MCF 10A (cell line): ENCODE measurements at regions of chr1 and their contacts with region 1.

Region 1: GRCh38 chr1:23344111-23344986 is at the start of gene HNRNPR:
- DNase-seq: peak; percentile 100
- H3K4me3 Mint-ChIP-seq: peak within 1 kb of the TSS; percentile 77
- H3K27ac Mint-ChIP-seq: peak within 1 kb of the TSS; percentile 76
- H3K4me1 Mint-ChIP-seq: peaks cover 36% of the 10 kb centered on the region
- H3K27me3 Mint-ChIP-seq: no peaks in the 10 kb centered on the region
- CTCF ChIP-seq: no peak
- total RNA-seq, gene HNRNPR: 128 and 152 TPM in 2 replicates

Region 2: DNA sequence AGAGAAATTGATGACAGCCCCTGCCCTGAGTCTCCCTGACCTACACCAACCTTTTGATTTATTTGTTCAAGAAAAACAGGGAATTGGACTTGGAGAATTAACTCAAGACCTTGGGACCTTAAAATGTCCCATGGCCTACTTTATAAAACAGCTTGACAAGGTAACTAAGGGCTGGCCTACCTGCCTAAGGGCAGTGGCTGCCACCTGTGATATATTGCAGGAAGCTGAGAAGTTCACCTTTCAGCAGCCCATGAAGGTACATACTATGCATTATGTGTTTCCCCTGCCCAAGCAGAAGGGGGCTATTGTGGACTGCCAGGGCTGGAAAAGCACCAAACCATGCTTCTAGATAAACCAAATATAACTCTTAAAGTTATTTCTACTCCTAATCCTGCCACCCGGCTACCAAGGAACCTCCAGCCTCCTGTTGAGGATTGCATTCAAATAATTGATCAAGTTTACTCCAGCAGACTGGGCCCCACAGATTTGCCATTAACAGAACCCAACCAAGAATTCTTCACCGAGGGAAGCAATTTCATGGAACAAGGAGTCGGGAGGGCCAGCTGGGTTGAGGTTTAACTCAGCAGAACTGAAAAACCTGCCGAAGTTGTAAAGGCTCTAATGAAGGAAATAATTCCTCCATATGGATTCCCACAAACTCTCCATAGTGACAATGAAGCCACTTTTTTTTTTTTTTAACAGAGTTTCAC is 399.8 kb before region 1 on chr1:
- CTCF ChIA-PET with region 1: no interaction called
- POLR2A ChIA-PET with region 1: no interaction called
- intact Hi-C with region 1: no loop called
- DNase-seq: no peak
- H3K4me3 Mint-ChIP-seq: no peak overlapping the region
- H3K27ac Mint-ChIP-seq: no peak overlapping the region
- H3K4me1 Mint-ChIP-seq: no peaks in the 10 kb centered on the region
- H3K27me3 Mint-ChIP-seq: no peaks in the 10 kb centered on the region
- CTCF ChIP-seq: no peak

Region 3: DNA sequence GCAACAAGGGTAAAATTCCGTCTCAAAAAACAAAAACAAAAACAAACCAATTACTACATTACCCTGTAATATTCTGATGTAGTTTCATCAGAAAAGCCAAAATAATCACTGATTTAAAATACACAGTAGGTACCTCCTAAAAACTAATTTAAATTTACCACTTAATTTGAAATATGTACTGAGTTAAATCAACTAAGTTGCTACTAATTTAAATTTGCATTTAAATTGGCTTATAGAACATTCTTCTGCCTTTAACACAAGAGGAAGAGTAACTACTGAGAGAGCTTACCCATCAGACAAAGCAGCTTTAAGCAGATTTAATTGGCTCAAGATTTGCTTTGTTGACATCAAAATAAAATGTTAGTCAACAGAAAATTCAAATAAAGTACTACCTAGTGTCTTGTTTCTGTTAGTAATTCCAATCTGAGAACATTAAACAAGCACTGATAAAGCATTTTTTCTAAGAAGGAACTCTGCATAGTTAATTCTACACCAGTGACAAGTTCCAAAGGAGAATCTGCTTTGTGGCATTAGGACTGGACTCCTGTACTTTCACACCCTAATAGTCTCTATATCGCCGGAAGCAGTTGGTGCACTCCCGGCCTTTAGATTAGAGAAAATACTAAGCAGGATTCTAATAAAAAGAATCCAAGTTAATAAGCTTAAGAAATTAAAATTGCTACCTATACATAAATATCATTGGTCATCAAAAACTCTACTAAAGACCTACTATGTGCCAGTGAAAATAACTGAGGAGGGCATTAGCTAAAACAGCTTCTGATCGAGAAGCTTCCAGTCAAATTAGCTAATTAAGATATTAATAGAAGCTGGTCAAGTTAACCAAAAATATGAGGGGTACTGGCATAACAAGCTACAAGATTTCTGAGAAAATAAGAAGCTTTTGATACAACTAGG is 184.1 kb before region 1 on chr1:
- CTCF ChIA-PET with region 1: no interaction called
- POLR2A ChIA-PET with region 1: no interaction called
- intact Hi-C with region 1: no loop called
- DNase-seq: no peak
- H3K4me3 Mint-ChIP-seq: no peak overlapping the region
- H3K27ac Mint-ChIP-seq: no peak overlapping the region
- H3K4me1 Mint-ChIP-seq: peaks cover 27% of the 10 kb centered on the region
- H3K27me3 Mint-ChIP-seq: no peaks in the 10 kb centered on the region
- CTCF ChIP-seq: no peak

Region 4: DNA sequence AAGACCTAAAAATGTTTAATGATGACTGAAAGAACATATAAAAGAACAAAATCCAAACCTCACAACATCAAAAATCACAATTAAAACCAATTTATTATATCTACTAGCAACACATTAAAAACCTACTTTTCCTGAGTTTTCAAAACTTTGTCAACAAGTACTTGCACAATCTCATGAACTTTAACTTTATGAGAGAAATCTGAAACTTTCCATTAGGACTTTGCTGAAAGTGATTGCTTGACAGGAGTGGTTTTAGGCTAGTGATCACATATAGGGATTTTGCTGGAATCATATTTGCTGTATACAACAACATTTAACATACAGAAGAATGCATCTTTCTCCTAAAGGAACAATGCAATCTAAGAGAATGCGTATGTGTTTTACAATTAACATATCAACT is 13.5 kb before region 1 on chr1:
- CTCF ChIA-PET with region 1: interaction called, 3 read pairs
- POLR2A ChIA-PET with region 1: interaction called, 31 read pairs
- intact Hi-C with region 1: no loop called
- DNase-seq: no peak
- H3K4me3 Mint-ChIP-seq: no peak overlapping the region
- H3K27ac Mint-ChIP-seq: no peak overlapping the region
- H3K4me1 Mint-ChIP-seq: peaks cover 13% of the 10 kb centered on the region
- H3K27me3 Mint-ChIP-seq: no peaks in the 10 kb centered on the region
- CTCF ChIP-seq: no peak

Region 5: GRCh38 chr1:23367791-23368561 is 23.6 kb after region 1 on chr1:
- CTCF ChIA-PET with region 1: interaction called, 6 read pairs
- POLR2A ChIA-PET with region 1: interaction called, 335 read pairs
- intact Hi-C with region 1: loop called (anchors 1 kb)
- DNase-seq: peak; percentile 99
- H3K4me3 Mint-ChIP-seq: peak overlapping the region; percentile 87
- H3K27ac Mint-ChIP-seq: peak overlapping the region; percentile 94
- H3K4me1 Mint-ChIP-seq: peaks cover 28% of the 10 kb centered on the region
- H3K27me3 Mint-ChIP-seq: no peaks in the 10 kb centered on the region
- CTCF ChIP-seq: no peak

Region 6: DNA sequence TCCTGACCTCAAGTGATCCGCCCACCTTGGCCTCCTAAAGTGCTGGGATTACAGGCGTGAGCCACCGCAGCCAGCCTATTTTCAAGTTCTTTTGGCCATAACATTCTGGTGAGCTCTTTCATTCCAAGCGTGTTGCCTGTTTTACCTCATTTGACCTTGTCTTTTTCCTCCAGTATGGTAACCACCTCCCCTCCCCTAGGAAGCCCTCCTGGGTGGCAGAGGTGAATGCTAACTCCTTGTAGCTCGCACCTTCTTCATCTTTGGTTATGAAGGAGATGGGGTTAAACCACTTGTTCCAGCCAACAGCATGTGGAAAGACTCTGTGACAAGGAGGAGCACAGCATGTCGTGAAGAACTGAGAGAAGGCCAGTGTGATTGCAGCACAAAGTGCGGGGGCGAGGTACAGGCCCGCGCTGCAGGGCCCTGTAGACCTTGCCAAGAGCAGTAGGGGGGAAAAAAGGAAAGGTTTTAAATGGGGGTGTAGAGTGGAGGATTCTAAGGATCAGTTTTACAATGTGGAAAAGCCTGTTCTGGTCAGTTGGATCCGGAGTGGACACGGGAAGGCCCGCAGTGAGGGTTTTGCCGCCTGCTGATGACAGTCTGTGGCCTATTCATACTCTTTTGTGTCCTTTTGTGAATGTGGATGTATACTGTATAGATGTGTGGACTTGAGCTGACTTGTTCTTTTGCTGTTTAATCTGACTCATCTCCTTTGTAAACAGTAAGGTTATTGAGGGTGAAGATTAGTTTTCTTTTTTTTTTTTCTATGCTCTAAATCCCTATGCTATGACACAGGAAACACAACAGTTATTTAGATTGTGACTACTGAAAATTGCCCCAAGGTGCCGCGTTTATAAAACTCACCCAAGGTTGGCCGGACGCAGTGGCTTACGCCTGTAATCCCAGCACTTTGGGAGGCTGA is 32.8 kb after region 1 on chr1:
- CTCF ChIA-PET with region 1: no interaction called
- POLR2A ChIA-PET with region 1: interaction called, 32 read pairs
- intact Hi-C with region 1: no loop called
- DNase-seq: peak; percentile 89
- H3K4me3 Mint-ChIP-seq: peak overlapping the region; percentile 11
- H3K27ac Mint-ChIP-seq: peak overlapping the region; percentile 87
- H3K4me1 Mint-ChIP-seq: peaks cover 15% of the 10 kb centered on the region
- H3K27me3 Mint-ChIP-seq: no peaks in the 10 kb centered on the region
- CTCF ChIP-seq: no peak

Region 7: DNA sequence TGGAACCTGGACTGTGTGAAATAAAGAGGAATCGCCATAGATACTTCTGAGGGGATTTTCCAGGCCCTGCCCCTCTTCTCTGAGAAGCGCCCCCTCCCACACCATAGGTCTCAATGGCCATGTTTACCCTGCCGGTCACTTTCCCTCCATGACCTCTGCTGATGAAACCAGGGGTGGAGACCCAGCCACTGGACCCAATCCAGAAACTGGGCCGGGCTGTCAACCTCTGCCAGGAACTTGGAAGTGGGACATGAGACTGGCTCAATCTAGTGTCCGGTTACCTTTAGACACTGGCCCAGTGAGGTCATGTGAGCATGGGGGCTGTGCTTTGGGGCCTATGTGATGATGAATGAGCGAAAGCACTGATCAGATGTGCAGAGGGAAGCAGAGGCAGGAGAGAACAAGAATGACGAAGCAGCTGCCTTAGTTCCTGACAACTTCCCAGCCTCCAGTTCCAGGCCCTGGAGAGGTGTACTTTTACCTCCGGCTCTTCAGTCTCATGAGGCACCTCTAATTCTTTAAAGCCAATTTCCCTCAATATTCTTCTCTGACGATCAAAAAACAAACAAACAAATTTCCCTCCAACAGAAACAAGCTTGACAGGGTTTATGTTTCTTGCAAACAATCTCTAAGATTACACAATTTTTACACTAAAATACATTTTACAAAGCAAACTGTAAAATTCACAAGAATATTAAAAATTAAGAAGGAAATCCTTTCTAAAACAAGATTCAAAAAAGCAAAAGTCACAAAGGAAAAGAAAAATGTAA is 134.7 kb after region 1 on chr1:
- CTCF ChIA-PET with region 1: interaction called, 3 read pairs
- POLR2A ChIA-PET with region 1: interaction called, 8 read pairs
- intact Hi-C with region 1: loop called (anchors 5 kb)
- DNase-seq: peak; percentile 94
- H3K4me3 Mint-ChIP-seq: peak overlapping the region; percentile 56
- H3K27ac Mint-ChIP-seq: peak overlapping the region; percentile 93
- H3K4me1 Mint-ChIP-seq: peaks cover 46% of the 10 kb centered on the region
- H3K27me3 Mint-ChIP-seq: no peaks in the 10 kb centered on the region
- CTCF ChIP-seq: no peak

Region 8: GRCh38 chr1:23539698-23540266 is 195.4 kb after region 1 on chr1:
- CTCF ChIA-PET with region 1: no interaction called
- POLR2A ChIA-PET with region 1: interaction called, 3 read pairs
- intact Hi-C with region 1: loop called (anchors 5 kb)
- DNase-seq: peak; percentile 90
- H3K4me3 Mint-ChIP-seq: no peak overlapping the region
- H3K27ac Mint-ChIP-seq: no peak overlapping the region
- H3K4me1 Mint-ChIP-seq: peaks cover 18% of the 10 kb centered on the region
- H3K27me3 Mint-ChIP-seq: no peaks in the 10 kb centered on the region
- CTCF ChIP-seq: peak; percentile 91